ENCODE measurements at regions of chr3 and their contacts with region 1.

Region 1: GRCh38 chr3:197137751-197138150 is 108.1 kb upstream of the MELTF start:
- DNase-seq: peak in 2 of 4 donors; percentile 16 to 30
- ATAC-seq: no peak
- H3K4me3 ChIP-seq: no peak overlapping the region
- H3K27ac ChIP-seq: no peak overlapping the region
- H3K4me1 ChIP-seq: peaks cover 4% of the 10 kb centered on the region
- H3K27me3 ChIP-seq: no peaks in the 10 kb centered on the region
- CTCF ChIP-seq: no peak
- POLR2A ChIP-seq: no peak

Region 2: GRCh38 chr3:196388956-196389355 is 748.8 kb before region 1 on chr3:
- intact Hi-C with region 1: loop called (anchors 10 kb)
- DNase-seq: no peak
- ATAC-seq: no peak
- H3K4me3 ChIP-seq: no peak overlapping the region
- H3K27ac ChIP-seq: no peak overlapping the region
- H3K4me1 ChIP-seq: no peaks in the 10 kb centered on the region
- H3K27me3 ChIP-seq: no peaks in the 10 kb centered on the region
- CTCF ChIP-seq: no peak
- POLR2A ChIP-seq: no peak